ENCODE measurements at regions of chr1 and their contacts with region 1.

Region 1: GRCh38 chr1:62643283-62643682 is 44.9 kb downstream of the DOCK7 start:
- DNase-seq: no peak
- H3K4me3 ChIP-seq: no peak overlapping the region
- H3K27ac ChIP-seq: no peak overlapping the region
- H3K27me3 ChIP-seq: no peaks in the 10 kb centered on the region
- CTCF ChIP-seq: no peak

Region 2: DNA sequence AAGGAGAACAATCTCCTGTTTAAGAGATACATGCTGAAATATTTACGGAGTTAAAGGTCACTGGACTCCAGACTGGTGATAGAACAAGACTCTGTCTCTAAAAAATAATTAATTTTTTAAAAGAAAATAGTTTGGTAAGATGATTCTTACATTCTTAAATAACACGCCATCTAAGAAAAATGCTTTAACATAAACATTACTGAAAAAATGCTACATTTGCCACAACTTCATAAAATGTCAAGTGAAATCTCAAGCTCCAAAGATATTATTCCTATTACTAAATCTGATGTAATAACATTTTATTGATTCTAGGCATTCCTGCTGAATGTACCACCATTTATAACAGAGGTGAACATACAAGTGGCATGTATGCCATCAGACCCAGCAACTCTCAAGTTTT is 41.8 kb before region 1 on chr1:
- CTCF ChIA-PET with region 1: no interaction called
- POLR2A ChIA-PET with region 1: no interaction called
- DNase-seq: peak; percentile 11
- H3K4me3 ChIP-seq: no peak overlapping the region
- H3K27ac ChIP-seq: no peak overlapping the region
- H3K27me3 ChIP-seq: no peaks in the 10 kb centered on the region
- CTCF ChIP-seq: no peak

Region 3: GRCh38 chr1:62989497-62989896 is 346.2 kb after region 1 on chr1:
- CTCF ChIA-PET with region 1: interaction called, 11 read pairs
- POLR2A ChIA-PET with region 1: no interaction called
- DNase-seq: no peak
- H3K4me3 ChIP-seq: no peak overlapping the region
- H3K27ac ChIP-seq: no peak overlapping the region
- H3K27me3 ChIP-seq: no peaks in the 10 kb centered on the region
- CTCF ChIP-seq: no peak; the same call in 1 of the 2 replicates